HepG2 (cell line): ENCODE measurements at regions of chrX and their contacts with region 1.

Region 1: GRCh38 chrX:119729408-119730201 is 28.8 kb upstream of the SOWAHD start:
- DNase-seq: peak; percentile 55
- ATAC-seq: peak; percentile 46; the same call in 2 of the 3 replicates
- H3K4me3 ChIP-seq: no peak overlapping the region
- H3K27ac ChIP-seq: no peak overlapping the region
- H3K4me1 ChIP-seq: no peaks in the 10 kb centered on the region
- H3K27me3 ChIP-seq: 0 out of 5 replicates have a peak, but pooled peaks cover 0 to under 1% of the 10 kb centered on the region in 2 experiments
- CTCF ChIP-seq: peak; percentile 57
- EP300 ChIP-seq: no peak
- POLR2A ChIP-seq: no peak
- RAD21 ChIP-seq: 0 out of 2 replicates have a peak, but pooled peaks have one; percentile 26

Region 2: GRCh38 chrX:119606280-119607015 is 123.2 kb before region 1 on chrX and contains the start of gene NKRF:
- CTCF ChIA-PET with region 1: no interaction called
- POLR2A ChIA-PET with region 1: interaction called, 4 read pairs
- in situ Hi-C with region 1: no loop called
- intact Hi-C with region 1: loop called (anchors 2 kb)
- DNase-seq: peak; percentile 82
- ATAC-seq: peak; percentile 89
- H3K4me3 ChIP-seq: peak within 1 kb of the TSS; percentile 76 to 89 (median 82)
- H3K27ac ChIP-seq: peak within 1 kb of the TSS; percentile 83
- H3K4me1 ChIP-seq: peaks cover 26% of the 10 kb centered on the region
- H3K27me3 ChIP-seq: no peaks in the 10 kb centered on the region
- CTCF ChIP-seq: no peak
- EP300 ChIP-seq: no peak
- POLR2A ChIP-seq: peak; percentile 88 to 89
- RAD21 ChIP-seq: no peak
- total RNA-seq, gene NKRF: 6.0 and 12.2 TPM in 2 replicates

Region 3: GRCh38 chrX:119698845-119699244 is 30.8 kb before region 1 on chrX:
- CTCF ChIA-PET with region 1: no interaction called
- POLR2A ChIA-PET with region 1: no interaction called
- in situ Hi-C with region 1: no loop called
- intact Hi-C with region 1: loop called (anchors 5 kb)
- DNase-seq: peak; percentile 41
- ATAC-seq: no peak; the same call in 2 of the 3 replicates
- H3K4me3 ChIP-seq: no peak overlapping the region
- H3K27ac ChIP-seq: no peak overlapping the region
- H3K4me1 ChIP-seq: no peaks in the 10 kb centered on the region
- H3K27me3 ChIP-seq: no peaks in the 10 kb centered on the region
- CTCF ChIP-seq: peak; percentile 59
- EP300 ChIP-seq: no peak
- POLR2A ChIP-seq: no peak
- RAD21 ChIP-seq: no peak

Region 4: GRCh38 chrX:119745283-119745848 is 15.8 kb after region 1 on chrX:
- CTCF ChIA-PET with region 1: no interaction called
- POLR2A ChIA-PET with region 1: no interaction called
- in situ Hi-C with region 1: no loop called
- intact Hi-C with region 1: no loop called
- DNase-seq: no peak
- ATAC-seq: 0 out of 3 replicates have a peak, but pooled peaks have one; percentile 29
- H3K4me3 ChIP-seq: no peak overlapping the region
- H3K27ac ChIP-seq: no peak overlapping the region
- H3K4me1 ChIP-seq: no peaks in the 10 kb centered on the region
- H3K27me3 ChIP-seq: no peaks in the 10 kb centered on the region
- CTCF ChIP-seq: no peak
- EP300 ChIP-seq: no peak
- POLR2A ChIP-seq: no peak
- RAD21 ChIP-seq: no peak

Region 5: DNA sequence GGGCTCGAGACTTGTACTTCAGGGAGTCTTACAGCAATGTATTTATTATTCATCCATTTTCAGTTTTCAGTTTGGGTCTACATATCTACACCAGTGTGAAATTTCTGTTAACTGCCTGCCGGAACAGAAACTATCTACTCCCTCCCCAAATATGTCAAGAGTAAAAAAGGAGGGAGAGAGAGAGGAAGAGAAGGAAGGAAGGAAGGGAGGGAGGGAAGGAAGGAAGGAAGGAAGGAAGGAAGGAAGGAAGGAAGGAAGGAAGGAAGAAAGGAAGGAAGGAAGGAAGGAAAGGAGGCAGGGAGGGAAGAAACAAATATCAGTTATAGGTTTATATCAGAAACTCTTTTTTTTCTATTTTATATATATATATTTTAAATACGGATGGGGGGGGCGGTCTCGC is 49.2 kb after region 1 on chrX:
- CTCF ChIA-PET with region 1: interaction called, 3 read pairs
- POLR2A ChIA-PET with region 1: no interaction called
- in situ Hi-C with region 1: no loop called
- intact Hi-C with region 1: loop called (anchors 2 kb)
- DNase-seq: no peak
- ATAC-seq: no peak
- H3K4me3 ChIP-seq: no peak overlapping the region
- H3K27ac ChIP-seq: no peak overlapping the region
- H3K4me1 ChIP-seq: no peaks in the 10 kb centered on the region
- H3K27me3 ChIP-seq: no peaks in the 10 kb centered on the region
- CTCF ChIP-seq: no peak
- EP300 ChIP-seq: no peak
- POLR2A ChIP-seq: no peak
- RAD21 ChIP-seq: no peak